Activated CD4-positive, alpha-beta T cell treated with anti-CD3 and anti-CD28 coated beads, Interleukin-2, amount 10 ng/mL, durations not matched to agents 7 days and 5 days (primary cell): ENCODE measurements at regions of chr22 and their contacts with region 1.

Region 1: GRCh38 chr22:17580441-17581031 is 17.2 kb downstream of the SLC25A18 start:
- DNase-seq: no peak
- H3K4me3 Mint-ChIP-seq: no peak overlapping the region
- H3K27ac Mint-ChIP-seq: no peak overlapping the region
- H3K4me1 Mint-ChIP-seq: no peaks in the 10 kb centered on the region
- H3K27me3 Mint-ChIP-seq: no peaks in the 10 kb centered on the region

Region 2: GRCh38 chr22:17597217-17597616 is 16.7 kb after region 1 on chr22:
- CTCF ChIA-PET with region 1: interaction called, 3 read pairs
- POLR2A ChIA-PET with region 1: interaction called, 12 read pairs
- DNase-seq: no peak
- H3K4me3 Mint-ChIP-seq: no peak overlapping the region
- H3K27ac Mint-ChIP-seq: no peak overlapping the region
- H3K4me1 Mint-ChIP-seq: no peaks in the 10 kb centered on the region
- H3K27me3 Mint-ChIP-seq: no peaks in the 10 kb centered on the region